ENCODE measurements at regions of chr1 and their contacts with region 1.

Region 1: DNA sequence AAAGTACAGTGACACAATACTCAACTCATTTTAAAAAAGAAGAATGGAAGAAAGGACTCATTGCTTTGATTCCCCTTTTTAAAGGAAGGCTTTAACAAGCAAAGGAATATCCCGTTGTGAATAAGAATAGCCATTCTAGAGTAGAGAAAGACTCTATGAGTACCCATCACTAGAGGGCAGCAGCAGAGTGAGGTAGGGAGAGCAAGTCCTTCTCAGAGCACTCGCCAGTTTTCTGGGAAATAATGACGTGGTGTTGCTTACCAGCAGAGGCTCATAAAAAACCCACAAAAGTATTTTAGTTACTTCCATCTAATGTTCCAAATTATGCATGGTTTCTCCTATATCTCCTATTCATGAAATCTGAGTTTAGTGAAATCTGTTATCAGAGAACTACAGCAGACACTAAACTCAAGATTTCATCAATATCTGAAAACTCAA is 74.6 kb downstream of the USP24 start:
- DNase-seq: peak; percentile 57 to 68
- H3K4me3 ChIP-seq: no peak overlapping the region
- H3K27ac ChIP-seq: no peak overlapping the region
- H3K4me1 ChIP-seq: no peaks in the 10 kb centered on the region
- H3K27me3 ChIP-seq: no peaks in the 10 kb centered on the region
- CTCF ChIP-seq: peak; percentile 48 to 85 (median 77)
- POLR2A ChIP-seq: no peak

Region 2: GRCh38 chr1:54865238-54866073 is 275.1 kb before region 1 on chr1:
- intact Hi-C with region 1: no loop called
- DNase-seq: no peak
- H3K4me3 ChIP-seq: no peak overlapping the region
- H3K27ac ChIP-seq: no peak overlapping the region
- H3K4me1 ChIP-seq: no peaks in the 10 kb centered on the region
- H3K27me3 ChIP-seq: no peaks in the 10 kb centered on the region
- CTCF ChIP-seq: no peak
- POLR2A ChIP-seq: no peak

Region 3: DNA sequence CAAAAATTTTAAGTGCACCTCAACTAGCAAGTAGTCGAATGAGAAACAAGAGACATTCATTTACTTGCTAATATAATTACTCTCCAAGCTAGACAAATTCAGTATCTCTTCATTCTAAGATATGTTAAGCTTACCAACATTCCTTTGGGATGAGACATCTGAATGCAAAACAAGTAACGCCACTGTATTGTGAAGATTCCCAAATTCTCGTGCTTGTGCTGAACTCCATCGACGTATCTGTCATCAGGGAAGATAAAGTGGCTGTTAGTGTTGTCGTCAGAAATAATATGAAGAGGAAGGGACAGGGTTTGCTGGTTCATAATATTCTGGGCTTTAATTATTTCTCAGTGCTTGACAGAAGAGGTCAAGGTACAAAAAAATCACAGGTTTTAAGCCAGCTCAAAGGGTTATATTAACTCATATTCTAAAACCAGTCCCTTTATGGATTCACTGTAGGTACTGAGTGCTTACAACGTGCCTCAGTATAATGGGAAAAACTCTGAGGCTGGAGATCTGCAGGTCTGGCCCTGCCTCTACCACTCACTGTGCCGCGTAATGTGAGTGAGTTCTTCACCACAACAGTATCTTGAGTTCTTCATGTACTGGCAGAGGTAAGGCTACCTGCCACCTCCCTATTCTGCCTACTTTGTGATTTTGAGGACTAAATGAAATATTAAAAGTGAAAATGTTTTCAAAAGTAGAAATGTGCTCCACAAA is 59.2 kb before region 1 on chr1:
- intact Hi-C with region 1: no loop called
- DNase-seq: no peak
- H3K4me3 ChIP-seq: no peak overlapping the region
- H3K27ac ChIP-seq: no peak overlapping the region
- H3K4me1 ChIP-seq: no peaks in the 10 kb centered on the region
- H3K27me3 ChIP-seq: no peaks in the 10 kb centered on the region
- CTCF ChIP-seq: no peak
- POLR2A ChIP-seq: no peak

Region 4: GRCh38 chr1:55277377-55278130 is 137.0 kb after region 1 on chr1:
- intact Hi-C with region 1: loop called (anchors 5 kb)
- DNase-seq: peak; percentile 64 to 72
- H3K4me3 ChIP-seq: no peak overlapping the region
- H3K27ac ChIP-seq: no peak overlapping the region
- H3K4me1 ChIP-seq: no peaks in the 10 kb centered on the region
- H3K27me3 ChIP-seq: no peaks in the 10 kb centered on the region
- CTCF ChIP-seq: peak; percentile 45 to 88 (median 74)
- POLR2A ChIP-seq: no peak